Activated CD4-positive, alpha-beta T cell treated with anti-CD3 and anti-CD28 coated beads for 36 hours (primary cell): ENCODE measurements at regions of chr7 and their contacts with region 1.

Region 1: DNA sequence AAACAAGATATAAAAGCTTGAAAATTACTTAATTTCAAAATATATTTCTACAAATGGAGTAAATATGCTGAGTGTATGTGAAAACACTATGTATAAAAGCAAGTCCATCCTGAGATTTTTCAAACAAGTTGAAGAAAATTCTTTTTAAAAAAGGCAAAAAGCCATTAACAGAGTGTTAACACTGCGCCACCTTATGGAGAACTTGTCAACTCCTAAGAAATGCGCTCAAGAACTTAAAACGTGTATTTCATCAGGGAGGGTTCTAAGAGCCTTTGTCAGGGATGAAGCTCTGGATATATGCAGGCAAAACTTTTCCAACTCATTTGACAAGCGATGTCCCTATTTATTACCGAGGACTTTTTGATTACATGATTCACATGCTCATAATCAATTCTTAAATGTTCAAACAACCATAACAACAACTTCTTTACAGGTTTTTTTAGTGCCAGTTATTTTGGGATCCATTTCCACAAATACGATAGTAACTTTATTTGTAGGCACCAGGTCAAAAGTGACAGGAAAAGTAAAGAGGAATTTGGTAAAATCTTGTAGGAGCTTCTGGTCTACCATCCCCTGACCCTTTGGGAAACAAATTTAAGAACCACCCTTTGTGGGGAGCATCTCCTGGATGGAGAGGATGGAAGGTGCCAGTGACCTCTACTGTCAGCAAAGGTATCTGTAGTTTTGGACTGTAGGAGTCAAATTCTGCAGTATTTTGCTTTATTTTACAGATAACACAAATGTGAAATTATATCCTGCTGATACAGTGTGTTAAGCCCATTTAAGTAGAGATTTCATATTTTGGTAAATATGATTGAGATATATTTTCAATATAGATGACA is 23.2 kb downstream of the CALCR start:
- DNase-seq: no peak
- ATAC-seq: no peak
- H3K4me3 Mint-ChIP-seq: no peak overlapping the region
- H3K27ac Mint-ChIP-seq: no peak overlapping the region
- H3K4me1 Mint-ChIP-seq: no peaks in the 10 kb centered on the region
- H3K27me3 Mint-ChIP-seq: no peaks in the 10 kb centered on the region

Region 2: DNA sequence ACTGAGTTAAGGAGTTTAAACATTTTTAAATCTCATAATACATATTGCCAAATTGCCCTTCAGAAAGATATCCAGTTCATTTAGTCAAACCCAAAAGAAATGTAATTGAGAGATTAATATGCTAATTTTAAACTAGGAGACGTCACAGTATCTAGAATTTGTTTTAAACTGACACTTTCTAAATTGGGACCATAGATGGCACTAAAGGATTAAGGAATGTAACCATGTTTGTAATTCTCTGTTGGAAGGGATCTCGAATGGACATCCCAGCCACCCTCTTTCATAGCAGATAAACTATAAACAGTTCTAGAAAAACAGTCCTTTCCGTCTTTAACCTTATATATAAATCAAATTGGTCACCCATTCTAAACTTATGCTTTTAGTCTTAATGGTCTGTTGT is 373.1 kb before region 1 on chr7:
- CTCF ChIA-PET with region 1: no interaction called
- POLR2A ChIA-PET with region 1: no interaction called
- intact Hi-C with region 1: loop called in 1 of 2 experiments (anchors 5 kb)
- DNase-seq: no peak
- ATAC-seq: no peak
- H3K4me3 Mint-ChIP-seq: no peak overlapping the region
- H3K27ac Mint-ChIP-seq: no peak overlapping the region
- H3K4me1 Mint-ChIP-seq: no peaks in the 10 kb centered on the region
- H3K27me3 Mint-ChIP-seq: peaks cover 30% of the 10 kb centered on the region

Region 3: GRCh38 chr7:93442478-93443224 is 108.6 kb before region 1 on chr7:
- CTCF ChIA-PET with region 1: interaction called, 3 read pairs
- POLR2A ChIA-PET with region 1: no interaction called
- intact Hi-C with region 1: loop called (anchors 1 to 2 kb)
- DNase-seq: peak; percentile 62
- ATAC-seq: peak; percentile 58
- H3K4me3 Mint-ChIP-seq: no peak overlapping the region
- H3K27ac Mint-ChIP-seq: no peak overlapping the region
- H3K4me1 Mint-ChIP-seq: no peaks in the 10 kb centered on the region
- H3K27me3 Mint-ChIP-seq: no peaks in the 10 kb centered on the region